GM12878 (cell line): ENCODE measurements at regions of chr2 and their contacts with region 1.

Region 1: DNA sequence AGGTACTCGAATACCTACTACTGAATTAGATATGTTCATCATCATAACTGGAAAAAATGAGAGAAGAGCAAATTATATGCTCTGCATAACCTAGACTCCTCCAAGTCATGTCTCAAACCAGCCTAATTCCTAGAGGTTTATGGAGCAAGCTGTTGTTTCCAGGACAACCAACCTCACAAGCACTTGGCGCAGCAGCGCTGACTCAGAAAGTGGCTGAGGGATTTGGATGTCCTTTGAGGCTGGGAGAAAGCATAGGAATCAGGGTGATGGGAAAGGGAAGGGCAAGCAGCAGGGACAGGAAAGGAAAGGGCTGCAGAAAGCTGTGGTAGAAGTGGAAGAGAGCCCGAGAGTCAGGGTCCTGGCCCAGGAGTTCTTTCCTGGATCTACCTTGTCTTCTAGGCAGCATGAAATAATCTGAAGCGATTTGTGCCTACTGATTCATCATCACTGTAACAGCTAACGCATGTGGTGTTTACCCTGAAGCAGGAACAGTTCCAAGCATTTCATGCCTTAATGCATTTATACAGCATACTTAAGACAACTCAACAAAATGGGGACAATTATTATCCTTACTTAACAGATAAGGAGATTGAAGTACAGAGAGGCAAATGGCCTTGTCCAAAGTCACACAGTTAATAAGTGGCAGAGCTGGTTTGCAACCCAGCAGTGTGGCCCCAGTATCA is 3.7 kb downstream of the PLEK start:
- DNase-seq: no peak
- ATAC-seq: no peak; the same call in 1 of the 3 replicates
- H3K4me3 ChIP-seq: peak overlapping the region; percentile 84
- H3K27ac ChIP-seq: peak overlapping the region; percentile 94
- H3K4me1 ChIP-seq: peaks cover 18% of the 10 kb centered on the region
- H3K27me3 ChIP-seq: no peaks in the 10 kb centered on the region
- CTCF ChIP-seq: no peak
- EP300 ChIP-seq: no peak
- POLR2A ChIP-seq: no peak; the same call in 1 of the 2 replicates
- RAD21 ChIP-seq: no peak

Region 2: DNA sequence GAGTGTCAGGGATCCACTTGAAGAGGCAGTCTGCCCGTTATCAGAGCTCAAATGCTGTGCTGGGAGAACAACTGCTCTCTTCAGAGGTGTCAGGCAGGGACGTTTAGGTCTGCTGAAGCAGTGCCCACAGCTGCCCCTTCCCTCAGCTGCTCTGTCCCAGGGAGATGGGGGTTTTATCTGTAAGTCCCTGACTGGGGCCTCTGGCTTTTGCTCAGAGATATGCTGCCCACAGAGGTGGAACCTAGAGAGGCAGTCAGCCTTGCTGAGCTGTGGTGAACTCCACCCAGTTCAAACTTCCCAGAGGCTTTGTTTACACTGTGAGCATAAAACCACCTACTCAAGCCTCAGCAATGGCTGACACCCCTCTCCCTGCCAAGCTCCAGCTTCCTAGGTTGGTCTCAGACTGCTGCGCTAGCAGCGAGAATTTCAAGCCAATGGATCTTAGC is 34.4 kb after region 1 on chr2:
- CTCF ChIA-PET with region 1: interaction called, 5 read pairs
- POLR2A ChIA-PET with region 1: interaction called, 18 read pairs
- RAD21 ChIA-PET with region 1: interaction called, 9 read pairs
- SMC1A ChIA-PET with region 1: interaction called, 13 read pairs
- in situ Hi-C with region 1: no loop called
- intact Hi-C with region 1: no loop called
- DNase-seq: no peak
- ATAC-seq: peak; percentile 89
- H3K4me3 ChIP-seq: no peak overlapping the region
- H3K27ac ChIP-seq: peak overlapping the region; percentile 52
- H3K4me1 ChIP-seq: peaks cover 25% of the 10 kb centered on the region
- H3K27me3 ChIP-seq: no peaks in the 10 kb centered on the region
- CTCF ChIP-seq: no peak
- EP300 ChIP-seq: no peak
- POLR2A ChIP-seq: no peak
- RAD21 ChIP-seq: no peak

Region 3: GRCh38 chr2:68429311-68429826 is 60.6 kb after region 1 on chr2:
- CTCF ChIA-PET with region 1: interaction called, 10 read pairs
- POLR2A ChIA-PET with region 1: interaction called, 19 read pairs
- RAD21 ChIA-PET with region 1: interaction called, 15 read pairs
- SMC1A ChIA-PET with region 1: interaction called, 7 read pairs
- in situ Hi-C with region 1: no loop called
- intact Hi-C with region 1: no loop called
- DNase-seq: no peak
- ATAC-seq: no peak
- H3K4me3 ChIP-seq: no peak overlapping the region
- H3K27ac ChIP-seq: no peak overlapping the region
- H3K4me1 ChIP-seq: peaks cover 42% of the 10 kb centered on the region
- H3K27me3 ChIP-seq: no peaks in the 10 kb centered on the region
- CTCF ChIP-seq: no peak
- EP300 ChIP-seq: no peak
- POLR2A ChIP-seq: no peak
- RAD21 ChIP-seq: no peak

Region 4: DNA sequence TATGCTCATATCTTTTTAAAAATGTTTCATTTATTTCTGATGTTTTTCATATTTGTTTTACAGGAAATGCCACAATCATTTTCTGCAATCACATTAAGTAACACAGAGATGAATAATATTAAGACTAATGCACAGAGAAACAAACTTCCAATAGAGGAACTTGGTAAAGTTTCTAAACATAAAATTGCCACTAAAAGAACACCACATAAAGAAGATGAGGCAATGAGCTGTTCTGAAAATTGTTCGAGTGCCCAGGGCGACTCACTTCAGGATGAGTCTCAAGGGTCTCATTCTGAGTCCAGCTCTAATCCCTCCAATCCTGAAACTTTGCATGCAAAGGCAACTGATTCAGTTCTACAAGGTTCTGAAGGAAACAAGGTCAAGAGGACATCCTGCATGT is 169.0 kb after region 1 on chr2:
- CTCF ChIA-PET with region 1: no interaction called
- POLR2A ChIA-PET with region 1: no interaction called
- RAD21 ChIA-PET with region 1: no interaction called
- SMC1A ChIA-PET with region 1: no interaction called
- in situ Hi-C with region 1: no loop called
- intact Hi-C with region 1: no loop called
- DNase-seq: no peak
- ATAC-seq: no peak
- H3K4me3 ChIP-seq: no peak overlapping the region
- H3K27ac ChIP-seq: no peak overlapping the region
- H3K4me1 ChIP-seq: no peaks in the 10 kb centered on the region
- H3K27me3 ChIP-seq: no peaks in the 10 kb centered on the region
- CTCF ChIP-seq: no peak
- EP300 ChIP-seq: no peak
- POLR2A ChIP-seq: no peak
- RAD21 ChIP-seq: no peak

Region 5: DNA sequence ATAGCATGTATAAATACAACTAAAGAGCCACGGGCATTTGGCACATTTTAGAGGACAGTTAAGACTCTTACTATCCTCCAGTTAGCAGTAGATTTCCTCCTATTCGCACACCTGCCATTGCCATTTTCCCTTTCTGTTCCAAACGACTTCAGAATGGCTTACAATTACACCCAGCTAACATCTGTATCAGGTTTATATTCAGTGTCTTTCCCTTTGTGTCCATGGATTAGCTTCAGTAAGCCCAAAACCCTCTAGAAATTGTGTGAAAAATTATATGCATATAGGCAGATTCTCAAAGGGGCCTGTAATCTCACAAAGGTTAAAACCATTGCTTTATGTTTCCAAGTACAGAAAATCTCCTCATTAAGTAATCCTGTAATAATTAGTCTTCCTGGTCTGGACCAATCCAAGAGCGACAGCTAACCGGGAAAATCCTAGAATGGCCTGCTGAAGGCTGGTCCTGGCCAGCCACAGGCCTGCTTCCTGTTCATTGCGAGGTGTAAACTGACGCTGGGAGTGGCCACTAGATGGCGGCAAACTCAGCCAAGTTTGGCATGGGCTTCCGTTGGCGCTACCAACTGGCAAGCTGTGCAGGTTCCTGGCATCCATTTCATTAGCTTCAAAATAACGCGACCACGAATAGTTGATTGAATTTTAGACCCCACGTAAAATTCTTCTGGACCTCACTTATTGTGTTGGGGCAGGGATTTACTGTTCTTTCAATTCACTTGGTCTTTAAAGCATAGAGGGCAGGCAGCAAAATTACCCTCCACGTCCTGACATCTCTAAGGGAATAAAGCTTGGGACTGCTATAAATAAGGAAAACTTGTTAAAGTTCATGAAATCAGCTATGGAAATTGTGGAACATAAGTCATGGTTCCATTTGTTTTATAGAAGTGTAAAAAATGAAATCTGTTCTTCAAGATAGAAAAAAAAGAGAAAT is 382.9 kb after region 1 on chr2:
- CTCF ChIA-PET with region 1: no interaction called
- POLR2A ChIA-PET with region 1: no interaction called
- RAD21 ChIA-PET with region 1: no interaction called
- SMC1A ChIA-PET with region 1: no interaction called
- in situ Hi-C with region 1: no loop called
- intact Hi-C with region 1: no loop called
- DNase-seq: no peak
- ATAC-seq: peak; percentile 99
- H3K4me3 ChIP-seq: no peak overlapping the region
- H3K27ac ChIP-seq: no peak overlapping the region
- H3K4me1 ChIP-seq: no peaks in the 10 kb centered on the region
- H3K27me3 ChIP-seq: peaks cover 0 to 1% of the 10 kb centered on the region in 2 experiments; a peak in 2 of 4 replicates
- CTCF ChIP-seq: peak; percentile 90 to 94 (median 92)
- EP300 ChIP-seq: no peak
- POLR2A ChIP-seq: no peak
- RAD21 ChIP-seq: peak; percentile 89